Activated naive CD4-positive, alpha-beta T cell treated with anti-CD3 and anti-CD28 coated beads for 36 hours (primary cell): ENCODE measurements at regions of chr12 and their contacts with region 1.

Region 1: GRCh38 chr12:45234139-45234846 is 18.4 kb downstream of the ANO6 start:
- DNase-seq: no peak
- H3K4me3 Mint-ChIP-seq: peak overlapping the region; percentile 35
- H3K27ac Mint-ChIP-seq: peak overlapping the region; percentile 83
- H3K4me1 Mint-ChIP-seq: peaks cover 65% of the 10 kb centered on the region
- H3K27me3 Mint-ChIP-seq: no peaks in the 10 kb centered on the region

Region 2: GRCh38 chr12:44847888-44848702 is 386.2 kb before region 1 on chr12:
- CTCF ChIA-PET with region 1: no interaction called
- intact Hi-C with region 1: loop called (anchors 10 kb)
- DNase-seq: peak; percentile 79
- H3K4me3 Mint-ChIP-seq: peak overlapping the region; percentile 55
- H3K27ac Mint-ChIP-seq: peak overlapping the region; percentile 94
- H3K4me1 Mint-ChIP-seq: peaks cover 72% of the 10 kb centered on the region
- H3K27me3 Mint-ChIP-seq: no peaks in the 10 kb centered on the region

Region 3: DNA sequence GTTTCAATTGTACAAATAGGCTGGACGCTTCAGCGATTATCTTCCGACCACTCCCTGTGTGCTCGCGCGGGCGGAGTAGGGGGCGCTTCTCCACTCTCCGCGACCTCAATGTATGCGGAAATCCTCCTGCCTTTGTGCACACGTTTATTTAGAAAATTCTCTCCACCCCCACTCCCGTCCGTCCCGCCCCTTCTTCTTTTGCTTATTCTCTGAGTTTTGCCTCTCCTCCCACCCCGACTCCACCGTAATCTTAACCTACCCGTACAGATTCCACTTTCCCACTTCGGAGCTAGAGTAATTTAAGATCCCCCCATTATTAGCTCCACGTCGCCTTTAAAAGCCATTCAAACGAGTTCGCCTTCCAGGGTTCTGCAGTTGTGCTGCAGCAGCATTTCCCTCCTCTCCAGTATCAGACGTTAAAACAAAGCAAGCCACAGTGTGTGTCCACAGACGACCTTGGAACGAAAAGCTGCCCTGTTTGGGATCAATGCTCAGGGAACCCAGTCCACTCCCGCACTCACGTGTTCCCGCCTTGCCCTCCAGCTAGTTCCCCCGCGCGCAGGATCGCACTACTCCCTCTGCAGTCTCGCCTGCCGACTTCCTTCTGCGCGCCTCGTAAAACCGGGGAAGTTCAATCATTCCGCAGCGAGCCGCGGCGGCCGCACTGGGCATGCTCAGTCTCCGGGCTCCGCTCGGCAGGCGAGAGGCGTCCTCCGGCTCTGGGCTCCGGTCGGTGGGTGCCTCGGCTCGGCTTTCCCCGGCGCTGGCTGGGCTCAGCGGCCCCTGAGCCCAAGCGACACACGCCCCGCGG is 18.7 kb before region 1 on chr12 and contains the start of gene ANO6:
- CTCF ChIA-PET with region 1: interaction called, 7 read pairs
- intact Hi-C with region 1: loop called (anchors 1 kb)
- DNase-seq: peak; percentile 82
- H3K4me3 Mint-ChIP-seq: peak within 1 kb of the TSS; percentile 97
- H3K27ac Mint-ChIP-seq: peak within 1 kb of the TSS; percentile 95
- H3K4me1 Mint-ChIP-seq: peaks cover 36% of the 10 kb centered on the region
- H3K27me3 Mint-ChIP-seq: no peaks in the 10 kb centered on the region
- total RNA-seq, gene ANO6: 12.9 to 14.6 TPM

Region 4: GRCh38 chr12:45244561-45245343 is 10.5 kb after region 1 on chr12:
- CTCF ChIA-PET with region 1: interaction called, 3 read pairs
- intact Hi-C with region 1: loop called (anchors 1 kb)
- DNase-seq: peak; percentile 23
- H3K4me3 Mint-ChIP-seq: no peak overlapping the region
- H3K27ac Mint-ChIP-seq: no peak overlapping the region
- H3K4me1 Mint-ChIP-seq: peaks cover 24% of the 10 kb centered on the region
- H3K27me3 Mint-ChIP-seq: no peaks in the 10 kb centered on the region

Region 5: GRCh38 chr12:45518291-45519235 is 284.3 kb after region 1 on chr12:
- CTCF ChIA-PET with region 1: no interaction called
- intact Hi-C with region 1: loop called (anchors 5 kb)
- DNase-seq: peak; percentile 83
- H3K4me3 Mint-ChIP-seq: peak overlapping the region; percentile 40
- H3K27ac Mint-ChIP-seq: peak overlapping the region; percentile 85
- H3K4me1 Mint-ChIP-seq: peaks cover 12% of the 10 kb centered on the region
- H3K27me3 Mint-ChIP-seq: no peaks in the 10 kb centered on the region

Region 6: DNA sequence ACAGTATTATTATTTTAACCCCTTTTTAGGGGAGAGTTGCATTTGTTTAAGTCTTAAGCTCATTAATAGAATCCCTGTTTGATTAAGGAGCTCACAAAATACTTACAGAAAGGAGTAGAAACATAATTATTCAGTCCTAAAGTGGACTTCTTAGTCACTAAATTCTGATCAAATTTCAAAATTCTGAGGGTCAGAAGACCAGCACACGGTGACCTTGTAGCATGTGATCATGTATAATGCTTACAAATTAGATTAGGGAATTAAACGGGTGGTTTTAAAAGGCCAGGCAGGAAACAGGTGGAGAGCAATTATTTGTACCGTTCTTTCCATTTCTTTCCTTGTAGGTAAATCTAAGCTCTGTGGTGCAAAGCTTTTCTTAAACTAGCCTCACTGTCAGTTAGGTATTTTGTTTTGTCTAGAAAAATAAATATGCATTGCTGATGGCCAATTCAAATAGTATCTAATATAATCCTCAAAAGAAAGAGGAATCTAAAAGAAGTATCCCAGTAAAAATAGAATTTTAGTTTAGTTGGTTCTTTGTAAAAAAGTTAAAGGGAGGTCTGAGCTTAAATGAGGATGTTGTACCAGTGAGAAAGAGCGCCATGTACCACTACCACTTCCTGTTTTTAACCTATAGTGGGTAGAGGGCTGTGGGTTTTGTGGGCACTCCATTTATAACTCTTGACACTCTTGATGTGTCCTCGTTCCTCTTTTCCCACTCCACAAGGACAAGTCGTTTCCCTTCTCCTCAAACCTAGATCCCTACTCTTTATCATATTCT is 983.4 kb after region 1 on chr12:
- CTCF ChIA-PET with region 1: no interaction called
- intact Hi-C with region 1: loop called (anchors 5 kb)
- DNase-seq: peak; percentile 74
- H3K4me3 Mint-ChIP-seq: peak overlapping the region; percentile 33
- H3K27ac Mint-ChIP-seq: peak overlapping the region; percentile 100
- H3K4me1 Mint-ChIP-seq: peaks cover 95% of the 10 kb centered on the region
- H3K27me3 Mint-ChIP-seq: no peaks in the 10 kb centered on the region

Region 7: GRCh38 chr12:46794593-46795190 is 1560.4 kb after region 1 on chr12:
- CTCF ChIA-PET with region 1: no interaction called
- intact Hi-C with region 1: loop called (anchors 10 kb)
- DNase-seq: peak; percentile 46
- H3K4me3 Mint-ChIP-seq: no peak overlapping the region
- H3K27ac Mint-ChIP-seq: peak overlapping the region; percentile 80
- H3K4me1 Mint-ChIP-seq: peaks cover 27% of the 10 kb centered on the region
- H3K27me3 Mint-ChIP-seq: no peaks in the 10 kb centered on the region